Activated T-helper 2 cell treated with anti-CD3 and anti-CD28 coated beads, Interferon-gamma antibody, Interleukin-2, Interleukin-4, amounts not matched to agents 10 μg/mL and 5 μg/mL and 100 μg/mL, durations not matched to agents 14 hours and 24 hours and 36 hours (primary cell): ENCODE measurements at regions of chr12 and their contacts with region 1.

Region 1: GRCh38 chr12:25364529-25365339 is 114.0 kb upstream of the KRAS start:
- DNase-seq: no peak
- H3K4me3 Mint-ChIP-seq: peak overlapping the region; percentile 61
- H3K27ac Mint-ChIP-seq: peak overlapping the region; percentile 88
- H3K4me1 Mint-ChIP-seq: peaks cover 31% of the 10 kb centered on the region
- H3K27me3 Mint-ChIP-seq: peaks cover 4% of the 10 kb centered on the region

Region 2: DNA sequence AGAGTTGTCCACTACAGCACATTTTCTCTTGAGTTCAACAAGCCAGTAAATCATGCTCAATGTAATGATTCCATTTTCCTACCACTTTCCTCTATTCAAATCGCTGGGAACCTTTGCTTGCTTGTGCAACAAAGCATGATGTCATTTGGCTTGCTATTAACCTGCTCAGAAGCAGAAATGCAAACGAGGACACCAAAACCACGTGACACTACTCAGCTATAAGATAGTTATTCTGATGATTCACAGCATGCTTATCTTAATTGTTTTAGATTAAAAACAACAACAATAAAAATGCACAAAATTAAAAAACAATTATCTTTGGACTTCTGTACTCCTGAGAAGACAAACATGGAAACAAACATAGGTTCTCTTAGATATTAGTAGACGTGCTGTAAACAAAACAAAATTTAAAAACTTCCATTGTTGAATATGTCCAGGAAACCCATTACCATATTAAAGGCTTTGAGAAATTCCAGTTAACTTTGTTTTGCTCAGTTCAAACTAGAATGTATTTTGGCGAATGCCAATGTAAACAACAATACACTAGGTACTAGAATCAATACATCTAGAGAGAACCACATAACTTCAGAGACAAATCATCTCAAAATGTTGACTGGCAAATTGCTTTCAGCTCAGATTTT is 36.5 kb before region 1 on chr12:
- intact Hi-C with region 1: loop called (anchors 2 kb)
- DNase-seq: no peak
- H3K4me3 Mint-ChIP-seq: no peak overlapping the region
- H3K27ac Mint-ChIP-seq: no peak overlapping the region
- H3K4me1 Mint-ChIP-seq: peaks cover 20% of the 10 kb centered on the region
- H3K27me3 Mint-ChIP-seq: peaks cover 40% of the 10 kb centered on the region

Region 3: DNA sequence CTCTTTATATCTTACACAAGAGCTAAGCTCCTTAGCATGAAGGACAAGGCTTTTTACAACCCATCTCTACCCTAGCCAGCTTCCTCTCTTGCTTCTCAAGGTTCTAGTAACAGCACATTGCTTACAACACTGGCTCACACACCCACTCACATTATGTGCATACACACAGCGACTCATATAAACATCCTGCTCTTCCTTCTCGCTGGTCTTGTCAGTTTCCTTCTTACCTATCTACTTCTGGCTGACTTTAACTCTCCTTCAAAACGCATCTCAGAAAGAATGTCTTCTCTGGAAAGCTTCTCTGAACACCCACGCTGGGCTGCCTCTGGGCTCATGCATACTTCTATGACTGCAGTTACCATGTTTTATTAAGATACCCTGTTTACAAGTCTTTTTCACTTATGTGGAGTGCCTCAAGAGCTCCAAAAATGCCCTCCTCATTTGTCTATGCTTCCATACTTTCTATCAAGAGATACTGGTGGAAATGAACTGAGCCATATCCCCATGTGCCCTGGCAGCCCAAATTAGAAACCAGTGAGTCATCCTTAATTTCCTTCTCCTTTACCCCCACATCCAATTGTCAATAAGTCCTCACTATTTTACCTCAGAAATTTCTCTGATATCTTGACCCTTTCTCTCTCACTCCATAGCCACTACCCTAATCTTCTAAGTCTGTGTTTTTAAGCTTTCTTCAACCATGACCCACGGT is 12.9 kb after region 1 on chr12:
- intact Hi-C with region 1: loop called (anchors 1 kb)
- DNase-seq: peak; percentile 35
- H3K4me3 Mint-ChIP-seq: peak overlapping the region; percentile 43
- H3K27ac Mint-ChIP-seq: peak overlapping the region; percentile 70
- H3K4me1 Mint-ChIP-seq: peaks cover 70% of the 10 kb centered on the region
- H3K27me3 Mint-ChIP-seq: no peaks in the 10 kb centered on the region